H1 (cell line): ENCODE measurements at regions of chr1 and their contacts with region 1.

Region 1: DNA sequence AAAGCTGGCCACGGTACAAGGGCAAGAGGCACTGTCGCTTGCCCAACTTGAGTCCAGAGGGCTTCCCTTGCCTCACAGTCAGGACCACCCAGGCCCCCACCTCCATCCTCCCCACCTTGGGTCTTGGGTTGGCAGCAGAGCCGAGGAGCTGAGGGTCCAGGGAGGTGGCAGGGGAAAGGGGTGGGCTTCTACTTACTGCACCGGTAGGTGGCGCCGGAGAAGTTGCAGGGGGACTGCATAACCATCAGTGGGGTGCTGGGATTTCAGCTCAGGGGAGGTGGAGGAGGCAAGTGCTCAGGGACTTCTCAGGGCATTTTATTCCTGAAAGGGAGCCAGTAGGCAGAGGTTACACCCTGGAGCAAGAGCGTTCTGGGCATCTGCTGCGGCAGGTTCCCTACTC is 44.0 kb downstream of the TRIM62 start:
- DNase-seq: peak in 1 of 2 experiments; percentile 85
- H3K4me3 ChIP-seq: no peak overlapping the region
- H3K27ac ChIP-seq: no peak overlapping the region
- H3K4me1 ChIP-seq: peaks cover 6 to 20% (median 11%) of the 10 kb centered on the region in 4 experiments
- H3K27me3 ChIP-seq: no peaks in the 10 kb centered on the region; a peak in 1 of 7 replicates
- CTCF ChIP-seq: peak; percentile 74 to 89 (median 86)
- EP300 ChIP-seq: no peak
- POLR2A ChIP-seq: no peak
- RAD21 ChIP-seq: peak; percentile 73 to 80

Region 2: DNA sequence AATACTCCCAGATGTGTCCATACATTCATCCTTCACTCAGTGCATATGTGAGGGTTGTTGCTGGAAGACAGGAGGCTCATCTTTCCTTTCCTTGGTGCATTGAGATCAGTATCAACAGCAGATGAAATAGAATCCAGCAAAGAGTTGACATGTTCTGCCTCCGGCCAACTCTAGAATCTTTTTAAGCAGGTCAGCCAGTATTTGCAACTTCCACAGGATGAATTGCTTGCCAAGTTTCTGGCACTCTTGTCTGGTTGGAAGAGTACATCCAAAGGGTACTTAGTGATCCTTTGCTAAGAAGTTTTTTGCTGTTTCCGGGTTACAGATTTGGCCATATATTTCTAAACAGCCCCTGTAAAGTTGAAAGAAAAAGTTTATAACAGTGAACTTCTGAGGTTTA is 456.3 kb before region 1 on chr1:
- CTCF ChIA-PET with region 1: no interaction called
- POLR2A ChIA-PET with region 1: no interaction called
- DNase-seq: no peak
- H3K4me3 ChIP-seq: no peak overlapping the region
- H3K27ac ChIP-seq: no peak overlapping the region
- H3K4me1 ChIP-seq: no peaks in the 10 kb centered on the region
- H3K27me3 ChIP-seq: no peaks in the 10 kb centered on the region
- CTCF ChIP-seq: no peak
- EP300 ChIP-seq: no peak
- POLR2A ChIP-seq: no peak
- RAD21 ChIP-seq: no peak

Region 3: GRCh38 chr1:33030575-33030974 is 107.2 kb before region 1 on chr1:
- CTCF ChIA-PET with region 1: no interaction called
- POLR2A ChIA-PET with region 1: no interaction called
- DNase-seq: no peak
- H3K4me3 ChIP-seq: no peak overlapping the region
- H3K27ac ChIP-seq: no peak overlapping the region
- H3K4me1 ChIP-seq: peaks cover 0 to 3% (median 2%) of the 10 kb centered on the region in 4 experiments; a peak in 5 of 7 replicates
- H3K27me3 ChIP-seq: no peaks in the 10 kb centered on the region
- CTCF ChIP-seq: no peak
- EP300 ChIP-seq: no peak
- POLR2A ChIP-seq: no peak
- RAD21 ChIP-seq: no peak

Region 4: GRCh38 chr1:33094971-33095604 is 42.7 kb before region 1 on chr1:
- CTCF ChIA-PET with region 1: interaction called, 14 read pairs
- POLR2A ChIA-PET with region 1: no interaction called
- DNase-seq: peak; percentile 29 to 93
- H3K4me3 ChIP-seq: no peak overlapping the region
- H3K27ac ChIP-seq: no peak overlapping the region
- H3K4me1 ChIP-seq: peaks cover 0 to 3% (median 1%) of the 10 kb centered on the region in 4 experiments; a peak in 3 of 7 replicates
- H3K27me3 ChIP-seq: no peaks in the 10 kb centered on the region
- CTCF ChIP-seq: peak; percentile 55 to 94 (median 91)
- EP300 ChIP-seq: no peak
- POLR2A ChIP-seq: no peak
- RAD21 ChIP-seq: peak; percentile 52 to 68

Region 5: DNA sequence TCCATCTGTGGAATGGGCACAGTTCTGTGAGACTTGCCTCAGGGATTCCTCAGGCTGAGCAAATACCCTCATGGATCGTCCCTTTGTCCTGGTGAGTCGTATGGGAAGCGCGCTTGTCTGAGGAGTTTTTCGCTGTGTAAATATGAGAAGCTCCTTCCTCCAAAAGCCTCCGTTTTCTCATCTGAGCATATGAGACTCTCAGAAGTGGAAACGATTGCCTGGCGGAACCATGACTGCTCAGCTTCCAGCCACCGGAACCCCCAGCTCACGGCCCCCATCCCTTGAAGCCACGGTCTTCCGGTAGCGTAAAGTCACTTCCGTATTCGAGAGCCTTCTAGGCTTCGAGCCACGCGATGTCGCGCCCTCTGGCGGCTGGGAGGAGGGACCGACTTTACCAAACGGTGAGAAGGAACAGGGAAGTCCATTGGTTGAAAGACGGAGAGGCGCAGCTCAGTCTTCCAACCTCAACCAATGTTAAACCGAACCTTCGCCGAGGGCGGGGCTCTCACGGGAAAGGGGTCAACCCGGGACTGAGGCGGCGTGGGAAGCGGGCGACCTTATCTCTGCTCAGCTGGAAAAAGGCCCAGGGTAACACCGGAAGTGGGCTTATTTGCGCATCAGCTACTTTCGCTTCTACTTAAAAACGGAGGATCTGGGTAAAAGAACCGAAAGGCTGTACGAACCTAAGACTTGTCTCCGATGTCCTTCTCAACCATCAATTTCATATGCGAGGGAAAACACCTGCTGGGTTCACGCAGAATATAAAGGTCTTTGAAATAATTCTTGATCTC is 10.6 kb before region 1 on chr1:
- CTCF ChIA-PET with region 1: interaction called, 31 read pairs
- POLR2A ChIA-PET with region 1: interaction called, 4 read pairs
- DNase-seq: peak; percentile 92 to 93
- H3K4me3 ChIP-seq: peak overlapping the region; percentile 72 to 93 (median 88)
- H3K27ac ChIP-seq: peak overlapping the region; percentile 68
- H3K4me1 ChIP-seq: peaks cover 0 to 7% (median 2%) of the 10 kb centered on the region in 4 experiments; a peak in 6 of 7 replicates
- H3K27me3 ChIP-seq: peaks cover 0 to 6% (median 4%) of the 10 kb centered on the region in 4 experiments; a peak in 5 of 7 replicates
- CTCF ChIP-seq: peak; percentile 81 to 99 (median 93)
- EP300 ChIP-seq: 0 out of 3 replicates have a peak, but pooled peaks of 1 of the 2 experiments have one; percentile 37
- POLR2A ChIP-seq: peak; percentile 71 to 88
- RAD21 ChIP-seq: peak in 1 of 2 experiments; percentile 34; a peak in 3 of 4 replicates

Region 6: GRCh38 chr1:33152685-33153432 is 15.1 kb after region 1 on chr1:
- CTCF ChIA-PET with region 1: interaction called, 55 read pairs
- POLR2A ChIA-PET with region 1: interaction called, 23 read pairs
- DNase-seq: peak; percentile 46 to 70
- H3K4me3 ChIP-seq: peak overlapping the region in 2 of 4 experiments; percentile 2 to 14; a peak in 1 of 8 replicates
- H3K27ac ChIP-seq: 0 out of 2 replicates have a peak overlapping the region, but pooled peaks have one; percentile 26
- H3K4me1 ChIP-seq: peaks cover 16 to 30% (median 19%) of the 10 kb centered on the region in 4 experiments
- H3K27me3 ChIP-seq: no peaks in the 10 kb centered on the region
- CTCF ChIP-seq: no peak
- EP300 ChIP-seq: no peak
- POLR2A ChIP-seq: no peak; a peak in 1 of 3 replicates
- RAD21 ChIP-seq: no peak

Region 7: DNA sequence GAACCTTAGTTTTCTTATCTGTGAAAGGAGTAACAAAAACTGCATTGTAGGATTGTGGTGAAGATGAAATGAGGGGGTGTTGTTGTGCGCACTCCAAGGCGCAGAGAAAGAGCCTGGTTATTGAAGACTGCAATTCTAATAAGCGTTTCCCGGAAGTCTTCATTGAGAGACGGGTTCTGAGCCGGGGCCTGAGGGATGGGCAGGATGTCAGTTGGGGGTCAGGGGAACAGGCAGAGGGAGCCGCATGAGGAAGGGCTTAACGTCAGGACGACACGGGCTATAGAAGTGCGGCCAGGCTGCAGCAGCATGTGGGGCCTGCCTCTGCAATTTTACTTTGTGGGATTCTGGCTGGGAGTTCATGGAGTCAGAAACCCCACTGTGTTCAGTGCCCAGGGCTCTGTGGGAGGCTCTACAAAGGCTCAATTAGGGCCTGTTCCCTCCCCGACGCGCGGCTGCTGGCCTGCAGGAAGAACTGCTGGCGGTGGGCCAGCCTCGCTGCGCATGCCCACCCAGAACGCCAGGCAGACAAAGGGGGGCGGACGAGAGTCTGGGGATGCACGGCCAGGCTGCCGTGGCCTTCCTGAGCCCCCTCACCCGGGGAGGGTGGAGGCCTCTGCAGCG is 23.4 kb after region 1 on chr1:
- CTCF ChIA-PET with region 1: interaction called, 11 read pairs
- POLR2A ChIA-PET with region 1: interaction called, 7 read pairs
- DNase-seq: no peak
- H3K4me3 ChIP-seq: no peak overlapping the region
- H3K27ac ChIP-seq: no peak overlapping the region
- H3K4me1 ChIP-seq: peaks cover 0 to 27% (median 19%) of the 10 kb centered on the region in 4 experiments; a peak in 6 of 7 replicates
- H3K27me3 ChIP-seq: no peaks in the 10 kb centered on the region
- CTCF ChIP-seq: no peak
- EP300 ChIP-seq: no peak
- POLR2A ChIP-seq: no peak
- RAD21 ChIP-seq: no peak

Region 8: DNA sequence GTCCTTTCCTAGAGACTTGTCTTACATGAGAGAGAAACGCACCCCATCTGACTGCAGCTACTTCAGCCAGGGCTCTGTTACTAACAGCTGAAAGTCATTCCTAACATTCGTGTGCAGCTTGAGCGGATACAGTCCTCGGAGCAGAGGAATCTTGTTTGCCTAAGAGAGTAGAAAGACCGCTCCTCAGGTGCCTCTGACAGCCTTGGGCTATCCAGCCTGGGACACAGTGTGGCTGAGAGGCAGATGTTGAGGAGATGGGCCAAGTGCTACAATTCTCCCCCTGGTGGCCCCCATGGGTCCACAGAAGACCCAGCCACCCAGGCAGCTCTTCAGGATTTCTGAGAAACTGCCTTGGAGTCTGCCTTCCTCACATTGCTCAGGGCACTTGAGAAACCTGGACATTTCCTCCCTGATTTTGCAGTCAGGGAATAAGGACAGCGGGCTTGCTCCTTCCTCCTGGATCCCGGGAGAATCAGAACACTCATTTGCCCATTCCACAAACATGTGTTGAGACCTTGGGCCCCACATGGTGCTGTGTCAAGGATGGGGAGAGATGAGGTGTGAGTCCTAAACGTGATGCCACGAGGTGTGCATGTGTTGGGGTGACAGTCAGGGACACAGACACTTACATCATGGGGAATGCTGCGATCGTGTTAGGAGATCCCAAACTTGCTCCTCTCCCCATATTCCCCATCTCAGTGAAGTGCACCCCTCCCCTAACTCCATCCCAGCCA is 30.9 kb after region 1 on chr1:
- CTCF ChIA-PET with region 1: interaction called, 14 read pairs
- POLR2A ChIA-PET with region 1: interaction called, 4 read pairs
- DNase-seq: no peak
- H3K4me3 ChIP-seq: no peak overlapping the region
- H3K27ac ChIP-seq: no peak overlapping the region
- H3K4me1 ChIP-seq: peaks cover 0 to 23% (median 14%) of the 10 kb centered on the region in 4 experiments; a peak in 6 of 7 replicates
- H3K27me3 ChIP-seq: no peaks in the 10 kb centered on the region
- CTCF ChIP-seq: peak in 2 of 3 experiments; percentile 8 to 24; a peak in 3 of 4 replicates
- EP300 ChIP-seq: no peak
- POLR2A ChIP-seq: no peak
- RAD21 ChIP-seq: peak in 1 of 2 experiments; percentile 27; a peak in 1 of 4 replicates

Region 9: GRCh38 chr1:33181921-33182341 is 44.1 kb after region 1 on chr1 and contains the start of gene TRIM62:
- CTCF ChIA-PET with region 1: interaction called, 10 read pairs
- POLR2A ChIA-PET with region 1: interaction called, 3 read pairs
- DNase-seq: peak; percentile 61 to 86
- H3K4me3 ChIP-seq: peak within 1 kb of the TSS; percentile 35 to 79 (median 62)
- H3K27ac ChIP-seq: no peak within 1 kb of the TSS
- H3K4me1 ChIP-seq: peaks cover 0 to 15% (median 9%) of the 10 kb centered on the region in 4 experiments; a peak in 6 of 7 replicates
- H3K27me3 ChIP-seq: no peaks in the 10 kb centered on the region; a peak in 1 of 7 replicates
- CTCF ChIP-seq: no peak
- EP300 ChIP-seq: no peak; a peak in 1 of 3 replicates
- POLR2A ChIP-seq: peak in 1 of 2 experiments; percentile 46; a peak in 2 of 3 replicates
- RAD21 ChIP-seq: no peak
- total RNA-seq, gene TRIM62: 10.3 and 10.8 TPM in 2 replicates